ENCODE measurements at regions of chr20 and their contacts with region 1.

Region 1: DNA sequence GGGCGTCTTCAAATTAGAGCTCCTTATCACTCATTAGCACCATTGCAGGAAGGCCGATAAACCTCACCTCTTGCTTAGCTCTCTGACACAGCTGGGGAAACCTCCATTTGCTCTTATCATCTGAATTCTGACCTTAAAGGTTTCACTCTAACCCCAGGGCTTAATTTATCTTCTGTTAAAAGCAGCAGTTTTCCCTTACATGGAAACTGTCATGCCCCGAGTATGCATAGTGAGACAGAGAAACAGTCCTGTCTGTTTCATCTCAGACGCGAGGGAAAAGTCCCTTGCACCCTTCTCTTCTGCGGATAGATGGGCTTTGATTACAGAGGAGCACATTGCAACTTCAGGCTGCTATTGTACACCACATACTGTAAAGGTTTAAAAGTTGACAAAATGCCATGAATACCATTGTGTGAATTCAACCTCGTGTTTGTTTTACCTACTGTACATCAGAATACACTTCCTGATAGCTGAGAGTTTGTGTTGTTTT is 191.5 kb upstream of the BMP2 start:
- DNase-seq: no peak
- H3K4me3 Mint-ChIP-seq: peak overlapping the region; percentile 32
- H3K27ac Mint-ChIP-seq: peak overlapping the region; percentile 42
- H3K4me1 Mint-ChIP-seq: peaks cover 32% of the 10 kb centered on the region
- H3K27me3 Mint-ChIP-seq: no peaks in the 10 kb centered on the region
- CTCF ChIP-seq: no peak

Region 2: DNA sequence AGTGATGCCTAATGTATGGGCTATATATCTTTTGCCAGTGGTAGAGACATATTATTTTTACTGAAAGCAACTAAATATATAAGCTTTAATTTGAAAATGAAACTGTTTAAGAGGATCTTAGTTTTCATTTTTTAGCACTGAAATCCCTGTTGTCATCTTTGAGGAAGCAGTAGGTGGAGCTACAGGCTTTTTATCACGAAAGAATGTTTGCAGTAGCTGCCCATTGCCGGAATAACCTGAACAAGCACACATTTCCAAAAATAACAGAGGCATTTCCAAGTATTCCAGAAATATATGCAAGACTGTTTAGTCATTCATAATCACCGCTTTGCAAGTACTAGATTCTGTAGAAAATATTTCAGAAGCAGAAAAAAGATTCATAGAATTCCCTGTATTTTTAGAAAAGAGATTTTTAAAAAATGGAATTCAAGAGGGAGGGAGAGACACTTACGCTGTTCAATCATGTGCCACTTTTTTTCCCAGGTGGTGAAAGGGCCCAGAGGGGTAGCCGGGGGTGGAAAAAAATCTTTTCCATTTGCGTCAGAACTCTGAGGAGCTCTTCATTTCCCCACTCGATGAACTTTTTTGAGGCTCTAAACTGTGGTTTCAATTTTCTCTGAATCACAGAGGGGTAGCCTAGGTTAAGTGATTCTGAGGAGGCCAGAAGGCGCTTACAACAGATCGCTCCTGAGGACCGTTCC is 310.6 kb before region 1 on chr20:
- CTCF ChIA-PET with region 1: no interaction called
- intact Hi-C with region 1: loop called (anchors 10 kb)
- DNase-seq: peak; percentile 6
- H3K4me3 Mint-ChIP-seq: no peak overlapping the region
- H3K27ac Mint-ChIP-seq: no peak overlapping the region
- H3K4me1 Mint-ChIP-seq: peaks cover 8% of the 10 kb centered on the region
- H3K27me3 Mint-ChIP-seq: peaks cover 48% of the 10 kb centered on the region
- CTCF ChIP-seq: no peak

Region 3: GRCh38 chr20:6501061-6501460 is 74.9 kb before region 1 on chr20:
- CTCF ChIA-PET with region 1: no interaction called
- intact Hi-C with region 1: no loop called
- DNase-seq: peak; percentile 2
- H3K4me3 Mint-ChIP-seq: no peak overlapping the region
- H3K27ac Mint-ChIP-seq: no peak overlapping the region
- H3K4me1 Mint-ChIP-seq: peaks cover 8% of the 10 kb centered on the region
- H3K27me3 Mint-ChIP-seq: no peaks in the 10 kb centered on the region
- CTCF ChIP-seq: no peak

Region 4: GRCh38 chr20:6519556-6519955 is 56.4 kb before region 1 on chr20:
- CTCF ChIA-PET with region 1: no interaction called
- intact Hi-C with region 1: loop called (anchors 5 kb)
- DNase-seq: no peak
- H3K4me3 Mint-ChIP-seq: no peak overlapping the region
- H3K27ac Mint-ChIP-seq: peak overlapping the region; percentile 42
- H3K4me1 Mint-ChIP-seq: peaks cover 12% of the 10 kb centered on the region
- H3K27me3 Mint-ChIP-seq: no peaks in the 10 kb centered on the region
- CTCF ChIP-seq: no peak

Region 5: GRCh38 chr20:6533761-6534479 is 42.0 kb before region 1 on chr20:
- CTCF ChIA-PET with region 1: no interaction called
- intact Hi-C with region 1: no loop called
- DNase-seq: no peak
- H3K4me3 Mint-ChIP-seq: no peak overlapping the region
- H3K27ac Mint-ChIP-seq: no peak overlapping the region
- H3K4me1 Mint-ChIP-seq: peaks cover 9% of the 10 kb centered on the region
- H3K27me3 Mint-ChIP-seq: no peaks in the 10 kb centered on the region
- CTCF ChIP-seq: no peak

Region 6: GRCh38 chr20:6636209-6637159 is 60.5 kb after region 1 on chr20:
- CTCF ChIA-PET with region 1: no interaction called
- intact Hi-C with region 1: no loop called
- DNase-seq: peak; percentile 34
- H3K4me3 Mint-ChIP-seq: no peak overlapping the region
- H3K27ac Mint-ChIP-seq: no peak overlapping the region
- H3K4me1 Mint-ChIP-seq: peaks cover 8% of the 10 kb centered on the region
- H3K27me3 Mint-ChIP-seq: no peaks in the 10 kb centered on the region
- CTCF ChIP-seq: peak; percentile 31

Region 7: DNA sequence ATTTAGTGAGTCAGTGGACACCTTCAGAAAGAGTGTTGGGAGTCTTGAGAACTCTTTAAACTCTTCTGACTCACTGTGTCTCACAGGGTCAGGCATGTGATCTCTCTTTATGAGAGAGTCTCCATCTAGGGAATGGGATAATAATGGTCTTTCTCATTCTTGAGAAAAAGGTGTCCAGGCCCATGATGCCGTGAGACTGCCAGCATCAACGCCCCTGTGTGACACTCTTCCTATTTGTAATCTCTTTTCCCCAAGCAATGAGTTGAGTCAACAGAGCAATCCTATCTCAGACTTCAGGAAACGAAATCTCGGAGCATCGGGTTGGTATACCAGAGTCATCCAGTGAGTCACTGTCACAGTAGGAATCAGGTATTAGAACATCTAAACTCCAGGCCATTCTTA is 109.2 kb after region 1 on chr20:
- CTCF ChIA-PET with region 1: no interaction called
- intact Hi-C with region 1: no loop called
- DNase-seq: no peak
- H3K4me3 Mint-ChIP-seq: no peak overlapping the region
- H3K27ac Mint-ChIP-seq: no peak overlapping the region
- H3K4me1 Mint-ChIP-seq: peaks cover 5% of the 10 kb centered on the region
- H3K27me3 Mint-ChIP-seq: no peaks in the 10 kb centered on the region
- CTCF ChIP-seq: no peak

Measured in Calu3 (cell line).